OCI-LY7 (cell line): ENCODE measurements at regions of chr10 and their contacts with region 1.

Region 1: GRCh38 chr10:95363303-95363912 is 72.6 kb upstream of the PDLIM1 start:
- DNase-seq: peak; percentile 82
- H3K4me3 ChIP-seq: no peak overlapping the region
- H3K27ac ChIP-seq: no peak overlapping the region
- H3K4me1 ChIP-seq: peaks cover 8% of the 10 kb centered on the region
- CTCF ChIP-seq: peak; percentile 99

Region 2: DNA sequence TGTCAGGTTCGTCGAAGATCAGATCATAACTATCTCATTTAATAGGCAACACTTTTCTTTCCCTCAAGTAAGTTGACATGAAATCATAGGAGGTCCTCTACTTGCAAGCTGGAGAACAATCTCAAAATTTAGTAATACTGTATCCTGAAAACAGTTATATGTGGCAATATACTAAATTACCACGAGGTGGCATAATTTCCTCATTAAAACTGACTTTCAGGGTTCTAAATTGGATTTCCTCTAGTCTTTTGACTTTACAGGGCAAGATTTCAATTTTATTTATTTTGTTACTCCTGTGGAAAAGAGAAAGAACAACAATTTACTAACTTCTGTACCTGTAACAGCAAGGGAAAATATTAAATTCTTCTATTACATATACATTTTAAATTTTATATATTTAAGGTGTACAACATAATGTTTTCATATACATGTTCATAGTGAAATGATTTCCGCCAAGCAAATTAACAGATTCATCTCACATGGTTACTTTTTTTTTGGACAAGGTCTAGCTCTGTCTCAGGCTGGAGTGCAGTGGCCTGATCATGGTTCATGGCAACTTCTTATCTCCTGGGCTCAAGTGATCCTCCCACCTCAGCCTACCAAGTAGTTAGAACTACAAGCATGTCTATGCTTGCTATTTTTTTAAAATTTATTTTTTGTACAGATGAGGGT is 733.3 kb before region 1 on chr10:
- CTCF ChIA-PET with region 1: interaction called, 5 read pairs
- POLR2A ChIA-PET with region 1: no interaction called
- intact Hi-C with region 1: loop called (anchors 10 kb)
- DNase-seq: peak; percentile 48
- H3K4me3 ChIP-seq: no peak overlapping the region
- H3K27ac ChIP-seq: no peak overlapping the region
- H3K4me1 ChIP-seq: no peaks in the 10 kb centered on the region
- CTCF ChIP-seq: peak; percentile 87

Region 3: DNA sequence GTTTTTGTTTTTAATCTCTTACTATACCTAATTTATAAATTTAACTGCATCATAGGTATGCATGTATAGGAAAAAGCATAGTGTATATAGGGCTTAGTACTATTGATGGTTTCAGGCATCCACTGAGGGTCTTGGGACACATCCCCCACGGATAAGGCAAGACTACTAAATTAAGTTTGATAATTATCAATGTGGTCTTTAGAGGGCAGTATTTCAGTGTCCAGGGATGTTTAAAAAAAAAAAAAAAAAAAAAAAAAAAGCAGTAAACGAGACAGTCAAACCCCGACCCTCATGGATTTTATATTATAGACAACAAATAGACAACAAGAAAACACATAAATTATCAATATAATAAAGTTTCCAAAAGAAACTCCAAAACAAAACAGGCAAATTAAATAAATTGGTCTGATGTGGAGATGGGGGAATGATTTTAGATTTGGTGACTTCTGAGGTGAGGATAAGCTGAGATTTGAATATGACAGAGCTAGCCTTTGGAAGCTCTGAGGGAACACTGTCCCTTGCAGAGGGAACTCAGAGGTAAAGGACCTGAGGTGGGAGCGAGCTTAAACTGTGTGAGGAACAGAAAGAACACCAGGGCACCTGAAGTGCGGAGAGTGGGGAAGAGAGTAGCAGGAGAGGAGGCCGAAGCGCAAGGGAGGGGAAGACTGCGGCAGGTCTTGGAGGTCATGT is 154.6 kb before region 1 on chr10:
- CTCF ChIA-PET with region 1: no interaction called
- POLR2A ChIA-PET with region 1: interaction called, 3 read pairs
- intact Hi-C with region 1: loop called (anchors 2 kb)
- DNase-seq: peak; percentile 42
- H3K4me3 ChIP-seq: no peak overlapping the region
- H3K27ac ChIP-seq: no peak overlapping the region
- H3K4me1 ChIP-seq: no peaks in the 10 kb centered on the region
- CTCF ChIP-seq: peak; percentile 72

Region 4: GRCh38 chr10:95290461-95291364 is 72.7 kb before region 1 on chr10 and contains the start of gene PDLIM1:
- CTCF ChIA-PET with region 1: interaction called, 10 read pairs
- POLR2A ChIA-PET with region 1: interaction called, 5 read pairs
- intact Hi-C with region 1: loop called (anchors 1 kb)
- DNase-seq: peak; percentile 71
- H3K4me3 ChIP-seq: peak within 1 kb of the TSS; percentile 71
- H3K27ac ChIP-seq: no peak within 1 kb of the TSS
- H3K4me1 ChIP-seq: peaks cover 63% of the 10 kb centered on the region
- CTCF ChIP-seq: 0 out of 2 replicates have a peak, but pooled peaks have one; percentile 28
- total RNA-seq, gene PDLIM1: 22.3 and 23.1 TPM in 2 replicates

Region 5: DNA sequence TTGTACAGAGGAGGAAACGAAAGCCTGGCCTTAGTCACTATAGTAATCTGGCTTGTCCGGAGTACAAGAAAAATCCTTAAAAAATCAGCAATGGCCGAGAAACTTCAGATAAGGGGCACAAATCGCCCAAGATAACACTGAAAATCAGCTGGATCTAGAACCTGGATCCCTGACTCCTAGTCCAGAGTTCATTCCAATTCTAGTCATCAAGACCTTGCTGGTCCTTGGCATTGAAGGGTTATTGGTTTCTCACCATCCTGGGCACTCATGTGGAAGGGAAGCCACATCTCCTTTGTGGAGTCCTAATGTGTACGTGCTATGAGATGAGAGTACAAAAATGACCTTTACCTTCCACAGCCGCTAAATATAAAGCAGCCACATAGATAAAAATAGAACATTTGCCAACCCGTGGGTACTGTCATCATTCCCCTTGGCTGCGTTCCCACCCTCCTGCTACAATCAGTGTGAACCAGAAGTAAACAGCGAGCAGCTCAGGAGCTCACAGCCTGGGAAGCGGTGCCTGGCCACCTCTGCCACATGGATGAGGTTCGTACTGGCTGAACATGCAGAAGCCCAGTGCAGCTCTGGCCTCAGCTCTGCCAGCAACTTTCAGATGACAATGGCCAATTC is 43.4 kb after region 1 on chr10:
- CTCF ChIA-PET with region 1: no interaction called
- POLR2A ChIA-PET with region 1: no interaction called
- intact Hi-C with region 1: no loop called
- DNase-seq: no peak
- H3K4me3 ChIP-seq: no peak overlapping the region
- H3K27ac ChIP-seq: no peak overlapping the region
- H3K4me1 ChIP-seq: peaks cover 6% of the 10 kb centered on the region
- CTCF ChIP-seq: no peak

Region 6: DNA sequence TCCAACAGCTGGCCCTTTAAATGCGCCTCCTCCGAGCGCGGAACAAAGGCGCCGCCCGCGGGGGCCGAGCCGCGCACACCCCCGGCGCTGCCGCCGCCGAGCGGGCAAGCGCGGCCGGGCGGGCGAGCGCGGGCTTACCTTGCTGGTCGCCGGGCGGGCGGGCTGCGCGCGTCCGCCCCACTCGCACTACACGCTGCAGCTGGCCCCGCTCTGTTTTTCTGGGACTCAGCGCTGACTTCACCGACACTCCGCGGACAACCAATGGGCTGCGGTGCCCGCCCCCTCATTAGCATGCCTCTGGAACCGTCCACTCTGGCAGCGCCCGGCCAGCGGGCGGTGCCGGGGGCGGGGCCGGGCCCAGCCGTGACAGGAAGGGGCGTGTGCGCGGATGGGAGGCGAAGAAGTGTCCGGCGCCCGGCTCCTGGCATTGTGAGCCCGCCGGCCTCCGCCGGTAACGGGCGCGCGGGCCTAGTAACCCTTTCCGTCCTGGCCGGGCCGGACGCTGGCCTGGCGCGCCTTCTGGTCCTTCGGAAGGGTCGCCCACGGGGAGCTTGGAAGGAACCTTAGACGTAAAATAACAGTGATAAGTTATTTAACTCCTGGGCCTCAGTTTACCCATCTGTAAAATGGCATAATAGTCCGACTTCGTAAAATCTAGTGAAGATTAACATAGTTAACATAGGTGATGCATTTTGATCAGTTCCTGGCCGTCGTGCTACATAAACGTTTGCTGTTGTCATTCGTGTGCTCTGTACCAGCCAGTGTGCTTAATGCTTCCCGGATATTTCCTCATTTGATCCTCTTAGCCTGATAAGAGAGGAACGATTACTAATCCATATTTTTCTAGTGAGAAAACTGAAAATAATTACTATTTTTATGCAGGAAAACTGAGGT is 198.0 kb after region 1 on chr10 and contains the start of gene SORBS1:
- CTCF ChIA-PET with region 1: no interaction called
- POLR2A ChIA-PET with region 1: no interaction called
- intact Hi-C with region 1: no loop called
- DNase-seq: peak; percentile 91
- H3K4me3 ChIP-seq: peak within 1 kb of the TSS; percentile 86
- H3K27ac ChIP-seq: no peak within 1 kb of the TSS
- H3K4me1 ChIP-seq: no peaks in the 10 kb centered on the region
- CTCF ChIP-seq: no peak
- total RNA-seq, gene SORBS1: 0.10 and 0.57 TPM in 2 replicates

Region 7: GRCh38 chr10:95650232-95650631 is 286.8 kb after region 1 on chr10:
- CTCF ChIA-PET with region 1: no interaction called
- POLR2A ChIA-PET with region 1: no interaction called
- intact Hi-C with region 1: no loop called
- DNase-seq: no peak
- H3K4me3 ChIP-seq: no peak overlapping the region
- H3K27ac ChIP-seq: no peak overlapping the region
- H3K4me1 ChIP-seq: peaks cover 9% of the 10 kb centered on the region
- CTCF ChIP-seq: no peak